ENCODE measurements at regions of chr6 and their contacts with region 1.

Region 1: GRCh38 chr6:68226460-68226859 is 408.6 kb upstream of the ADGRB3 start:
- DNase-seq: no peak
- ATAC-seq: no peak
- H3K4me3 Mint-ChIP-seq: no peak overlapping the region
- H3K27ac Mint-ChIP-seq: no peak overlapping the region
- H3K4me1 Mint-ChIP-seq: peaks cover 22% of the 10 kb centered on the region
- H3K27me3 Mint-ChIP-seq: no peaks in the 10 kb centered on the region
- CTCF ChIP-seq: no peak

Region 2: DNA sequence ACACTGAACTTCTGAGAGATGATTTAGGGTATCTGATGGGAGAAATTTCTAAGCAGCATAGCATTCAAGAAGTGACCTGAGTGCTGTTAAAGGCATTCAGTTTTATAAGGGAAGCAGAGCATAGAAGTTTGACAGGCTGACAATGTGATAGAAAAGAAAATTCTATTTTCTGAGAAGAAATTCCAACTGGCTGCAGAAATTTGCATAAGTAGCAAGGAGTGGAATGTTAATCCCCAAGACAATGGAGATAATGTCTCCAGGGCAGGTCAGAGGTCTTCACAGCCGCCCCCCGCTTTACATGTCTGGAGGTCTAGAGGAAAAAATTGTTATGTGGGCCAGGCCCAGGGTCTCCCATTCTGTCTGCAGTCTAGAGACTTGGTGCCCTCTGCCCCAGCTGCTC is 1157.7 kb before region 1 on chr6:
- CTCF ChIA-PET with region 1: interaction called, 15 read pairs
- POLR2A ChIA-PET with region 1: no interaction called
- DNase-seq: no peak
- ATAC-seq: peak; percentile 50
- H3K4me3 Mint-ChIP-seq: no peak overlapping the region
- H3K27ac Mint-ChIP-seq: no peak overlapping the region
- H3K4me1 Mint-ChIP-seq: peaks cover 4% of the 10 kb centered on the region
- H3K27me3 Mint-ChIP-seq: no peaks in the 10 kb centered on the region
- CTCF ChIP-seq: no peak

Region 3: DNA sequence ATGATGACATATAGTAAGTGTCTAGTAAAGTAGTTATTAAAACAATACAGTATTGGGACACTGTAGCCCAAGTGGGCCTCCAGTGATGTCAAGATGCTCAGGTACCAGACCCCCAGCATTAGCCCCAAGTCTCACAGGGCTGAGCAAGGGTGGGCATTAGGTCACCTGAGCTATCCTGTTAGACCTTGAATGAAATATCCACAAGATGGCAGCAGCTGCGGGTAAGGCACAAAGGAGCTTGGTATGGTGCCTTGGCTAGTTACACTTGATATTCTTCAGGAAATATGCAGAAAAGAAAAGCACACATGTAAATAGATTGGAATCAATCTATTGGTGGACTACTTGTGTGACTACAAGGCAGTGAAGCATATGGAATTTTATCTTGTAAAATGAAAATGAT is 293.2 kb before region 1 on chr6:
- CTCF ChIA-PET with region 1: interaction called, 15 read pairs
- POLR2A ChIA-PET with region 1: no interaction called
- DNase-seq: peak; percentile 45
- ATAC-seq: peak; percentile 96
- H3K4me3 Mint-ChIP-seq: no peak overlapping the region
- H3K27ac Mint-ChIP-seq: no peak overlapping the region
- H3K4me1 Mint-ChIP-seq: peaks cover 8% of the 10 kb centered on the region
- H3K27me3 Mint-ChIP-seq: no peaks in the 10 kb centered on the region
- CTCF ChIP-seq: no peak

Measured in WTC11 (cell line).